ENCODE measurements at regions of chr3 and their contacts with region 1.

Region 1: GRCh38 chr3:70358978-70359580 is 46.6 kb upstream of the MDFIC2 start:
- DNase-seq: peak; percentile 0
- ATAC-seq: no peak
- H3K4me3 ChIP-seq: no peak overlapping the region
- H3K27ac ChIP-seq: no peak overlapping the region
- H3K4me1 ChIP-seq: no peaks in the 10 kb centered on the region
- H3K27me3 ChIP-seq: no peaks in the 10 kb centered on the region
- CTCF ChIP-seq: peak in 2 of 3 experiments; percentile 36 to 50; a peak in 4 of 6 replicates
- POLR2A ChIP-seq: no peak
- RAD21 ChIP-seq: no peak

Region 2: DNA sequence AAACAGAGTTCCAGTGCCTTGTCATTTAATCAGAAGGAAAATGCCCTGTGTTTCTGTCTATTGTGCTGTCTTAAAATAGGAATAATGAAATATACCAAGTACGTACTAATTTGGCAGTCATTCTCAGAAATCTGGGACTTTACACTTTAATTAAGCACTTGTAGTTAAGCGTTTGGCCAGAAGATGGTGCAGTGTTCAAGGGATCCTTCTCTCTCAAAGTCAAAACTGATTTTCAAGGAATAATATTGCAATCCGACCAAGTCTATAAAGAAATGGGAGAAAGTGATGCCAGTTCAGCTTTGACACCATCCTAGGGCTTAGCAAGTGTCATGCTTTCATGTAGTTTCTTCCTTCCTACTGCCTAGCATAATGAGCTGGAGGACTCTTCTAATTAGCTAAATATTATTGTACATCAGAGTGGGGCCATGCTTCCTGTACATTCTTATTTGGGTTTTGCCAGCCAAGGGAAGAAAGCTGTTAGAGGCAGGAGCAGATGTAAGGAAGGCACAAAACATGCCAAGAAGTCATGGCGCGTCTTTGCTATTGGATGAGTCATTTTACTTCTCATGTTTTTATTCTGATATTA is 294.8 kb before region 1 on chr3:
- CTCF ChIA-PET with region 1: no interaction called
- POLR2A ChIA-PET with region 1: no interaction called
- RAD21 ChIA-PET with region 1: no interaction called
- intact Hi-C with region 1: loop called (anchors 5 kb)
- DNase-seq: peak; percentile 4
- ATAC-seq: no peak
- H3K4me3 ChIP-seq: no peak overlapping the region
- H3K27ac ChIP-seq: no peak overlapping the region
- H3K4me1 ChIP-seq: no peaks in the 10 kb centered on the region
- H3K27me3 ChIP-seq: no peaks in the 10 kb centered on the region; the same call in 1 of the 2 replicates
- CTCF ChIP-seq: peak; percentile 11 to 64 (median 34); a peak in 4 of 6 replicates
- POLR2A ChIP-seq: no peak
- RAD21 ChIP-seq: peak; percentile 49; the same call in 1 of the 2 replicates

Measured in HCT116 (cell line).